ENCODE measurements at regions of chr22 and their contacts with region 1.

Region 1: GRCh38 chr22:35622191-35622913 is 5.2 kb upstream of the MB start:
- DNase-seq: peak; percentile 62
- H3K4me3 Mint-ChIP-seq: no peak overlapping the region
- H3K27ac Mint-ChIP-seq: no peak overlapping the region
- H3K4me1 Mint-ChIP-seq: peaks cover 30% of the 10 kb centered on the region
- H3K27me3 Mint-ChIP-seq: no peaks in the 10 kb centered on the region
- CTCF ChIP-seq: no peak

Region 2: GRCh38 chr22:35275580-35275979 is 346.8 kb before region 1 on chr22:
- CTCF ChIA-PET with region 1: no interaction called
- intact Hi-C with region 1: no loop called
- DNase-seq: no peak
- H3K4me3 Mint-ChIP-seq: no peak overlapping the region
- H3K27ac Mint-ChIP-seq: no peak overlapping the region
- H3K4me1 Mint-ChIP-seq: no peaks in the 10 kb centered on the region
- H3K27me3 Mint-ChIP-seq: no peaks in the 10 kb centered on the region
- CTCF ChIP-seq: no peak

Region 3: GRCh38 chr22:35430897-35431322 is 191.4 kb before region 1 on chr22:
- CTCF ChIA-PET with region 1: interaction called, 11 read pairs
- intact Hi-C with region 1: loop called (anchors 1 kb)
- DNase-seq: peak; percentile 94
- H3K4me3 Mint-ChIP-seq: no peak overlapping the region
- H3K27ac Mint-ChIP-seq: no peak overlapping the region
- H3K4me1 Mint-ChIP-seq: no peaks in the 10 kb centered on the region
- H3K27me3 Mint-ChIP-seq: no peaks in the 10 kb centered on the region
- CTCF ChIP-seq: peak; percentile 97

Region 4: DNA sequence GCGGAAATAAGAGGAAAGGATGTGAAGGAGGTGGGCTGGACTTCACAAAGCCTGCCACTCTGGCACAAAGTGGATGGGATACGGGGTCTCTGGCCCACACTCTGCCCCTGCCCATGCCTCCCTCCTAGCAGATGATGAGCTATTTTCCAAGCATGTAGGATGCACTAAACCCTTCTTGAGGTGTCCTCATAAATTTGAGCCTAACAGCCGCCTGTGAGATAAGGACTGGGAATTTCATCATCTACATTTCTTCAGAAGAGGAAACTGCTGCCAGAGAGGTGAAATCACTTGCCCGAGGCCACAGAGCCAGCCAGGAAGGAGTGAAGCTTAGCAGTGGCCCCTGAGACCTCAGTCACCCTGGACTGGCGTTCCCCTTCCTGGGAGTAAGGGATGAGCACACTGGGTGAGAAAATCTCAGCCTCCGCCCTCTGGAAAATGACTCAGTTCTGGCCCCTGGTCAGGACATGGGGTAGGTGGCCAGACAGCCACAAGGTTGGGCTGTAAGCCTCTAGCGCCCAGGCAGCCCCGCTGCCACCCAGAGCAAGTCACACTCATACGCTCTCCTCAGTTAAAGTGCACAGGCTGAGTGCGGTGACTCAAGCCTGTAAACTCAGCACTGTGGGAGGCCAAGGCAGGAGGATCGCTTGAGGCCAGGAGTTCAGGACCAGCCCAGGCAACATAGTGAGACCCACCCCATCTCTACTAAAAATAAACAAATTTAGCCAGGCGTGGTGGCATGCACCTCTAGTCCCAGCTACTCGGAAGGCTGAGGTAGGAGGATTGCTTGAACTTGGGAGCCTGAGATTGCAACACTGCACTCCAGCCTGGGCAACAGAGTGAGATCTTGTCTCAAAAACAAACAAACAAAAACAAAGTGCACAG is 33.0 kb before region 1 on chr22:
- CTCF ChIA-PET with region 1: no interaction called
- intact Hi-C with region 1: loop called (anchors 5 kb)
- DNase-seq: peak; percentile 79
- H3K4me3 Mint-ChIP-seq: peak overlapping the region; percentile 40
- H3K27ac Mint-ChIP-seq: peak overlapping the region; percentile 87
- H3K4me1 Mint-ChIP-seq: peaks cover 52% of the 10 kb centered on the region
- H3K27me3 Mint-ChIP-seq: no peaks in the 10 kb centered on the region
- CTCF ChIP-seq: no peak

Region 5: DNA sequence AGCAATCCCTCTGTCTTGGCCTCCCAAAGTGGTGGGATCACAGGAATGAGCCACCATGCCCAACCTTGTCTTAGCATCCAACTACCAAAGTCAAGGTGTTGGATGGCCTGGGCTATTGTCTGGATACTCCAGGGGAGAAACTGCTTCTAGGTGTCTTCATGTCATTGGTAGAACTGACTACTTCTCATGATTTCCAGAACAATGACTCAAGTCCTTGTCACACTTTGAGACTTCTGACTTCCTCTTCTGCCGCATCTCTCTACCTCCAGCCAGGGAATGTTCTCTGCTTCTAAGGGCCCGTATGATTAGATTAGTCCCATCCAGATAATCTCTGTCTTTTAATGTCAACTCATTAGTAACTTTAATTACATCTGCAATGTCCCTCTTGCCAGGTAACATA is 56.5 kb after region 1 on chr22:
- CTCF ChIA-PET with region 1: no interaction called
- intact Hi-C with region 1: no loop called
- DNase-seq: no peak
- H3K4me3 Mint-ChIP-seq: no peak overlapping the region
- H3K27ac Mint-ChIP-seq: no peak overlapping the region
- H3K4me1 Mint-ChIP-seq: peaks cover 8% of the 10 kb centered on the region
- H3K27me3 Mint-ChIP-seq: peaks cover 13% of the 10 kb centered on the region
- CTCF ChIP-seq: no peak

Measured in Calu3 (cell line).